ENCODE measurements at regions of chr2 and their contacts with region 1.

Region 1: DNA sequence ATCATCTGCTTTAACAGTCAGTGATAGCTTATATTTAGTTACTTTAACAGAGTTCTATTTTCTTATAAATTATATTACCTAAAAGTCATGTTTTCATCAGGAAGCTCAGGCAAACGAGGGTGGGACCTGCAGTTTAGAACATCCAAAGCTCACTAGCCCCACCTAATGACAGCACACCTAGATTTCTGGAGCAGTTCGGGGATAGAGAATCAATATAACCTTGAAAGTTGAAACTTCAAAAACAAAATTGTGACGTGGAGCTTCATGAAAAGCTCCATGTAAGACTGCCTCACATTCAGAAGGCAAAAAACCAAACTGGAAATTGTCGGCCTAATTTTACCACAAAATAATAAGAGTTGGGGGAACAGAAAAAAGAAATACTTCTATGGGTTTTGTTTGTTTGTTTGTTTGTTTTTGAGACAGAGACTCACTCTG is 185.9 kb upstream of the CCDC150 start:
- DNase-seq: peak; percentile 43
- H3K4me3 Mint-ChIP-seq: no peak overlapping the region
- H3K27ac Mint-ChIP-seq: no peak overlapping the region
- H3K4me1 Mint-ChIP-seq: peaks cover 2% of the 10 kb centered on the region
- H3K27me3 Mint-ChIP-seq: peaks cover 4% of the 10 kb centered on the region

Region 2: GRCh38 chr2:196293751-196294512 is 159.7 kb before region 1 on chr2:
- CTCF ChIA-PET with region 1: interaction called, 15 read pairs
- DNase-seq: no peak
- H3K4me3 Mint-ChIP-seq: no peak overlapping the region
- H3K27ac Mint-ChIP-seq: no peak overlapping the region
- H3K4me1 Mint-ChIP-seq: peaks cover 37% of the 10 kb centered on the region
- H3K27me3 Mint-ChIP-seq: no peaks in the 10 kb centered on the region

Region 3: GRCh38 chr2:196322973-196323810 is 130.4 kb before region 1 on chr2:
- CTCF ChIA-PET with region 1: no interaction called
- DNase-seq: no peak
- H3K4me3 Mint-ChIP-seq: no peak overlapping the region
- H3K27ac Mint-ChIP-seq: no peak overlapping the region
- H3K4me1 Mint-ChIP-seq: no peaks in the 10 kb centered on the region
- H3K27me3 Mint-ChIP-seq: peaks cover 20% of the 10 kb centered on the region

Region 4: DNA sequence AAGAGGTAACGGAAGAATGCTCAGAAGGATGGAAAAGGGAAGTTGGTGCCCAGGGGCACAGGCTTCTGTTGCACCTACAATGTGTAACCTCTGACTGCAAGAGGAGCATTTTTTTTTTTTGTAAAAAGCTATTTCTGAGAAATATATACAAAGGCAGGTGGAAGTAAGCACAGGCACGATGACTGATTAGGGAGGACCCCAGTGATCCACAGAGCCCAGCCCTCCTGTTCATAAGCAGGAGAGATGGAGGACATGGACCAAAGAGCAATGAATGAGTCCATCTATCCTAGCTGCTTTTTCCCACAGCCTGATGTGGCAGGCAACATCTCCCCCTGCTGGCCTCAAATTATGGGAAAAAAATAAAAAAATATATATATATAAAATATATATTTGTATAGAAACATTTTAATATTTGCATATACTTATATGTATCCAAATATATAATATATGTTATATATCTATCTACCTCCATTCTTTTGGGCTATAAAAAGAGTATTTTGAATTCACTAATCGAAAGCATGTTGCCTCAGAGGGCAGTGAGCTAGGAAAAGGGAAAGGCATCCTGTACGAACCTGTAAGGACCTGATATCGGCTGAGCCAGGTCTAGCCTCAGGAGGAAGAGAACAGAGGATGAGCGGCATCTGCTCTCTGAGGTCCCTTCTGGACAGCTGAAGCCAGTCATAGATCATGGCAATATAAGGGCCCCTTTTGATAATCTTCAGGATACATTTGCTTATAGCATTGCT is 116.2 kb before region 1 on chr2:
- CTCF ChIA-PET with region 1: interaction called, 29 read pairs
- DNase-seq: peak; percentile 35
- H3K4me3 Mint-ChIP-seq: no peak overlapping the region
- H3K27ac Mint-ChIP-seq: no peak overlapping the region
- H3K4me1 Mint-ChIP-seq: no peaks in the 10 kb centered on the region
- H3K27me3 Mint-ChIP-seq: peaks cover 14% of the 10 kb centered on the region

Measured in activated naive CD4-positive, alpha-beta T cell treated with anti-CD3 and anti-CD28 coated beads, Interleukin-2, amount 10 ng/mL, durations not matched to agents 7 days and 5 days (primary cell).